CD8-positive, alpha-beta T cell (primary cell): ENCODE measurements at regions of chr20 and their contacts with region 1.

Region 1: GRCh38 chr20:24746351-24746685 is 202.8 kb upstream of the CST7 start:
- DNase-seq: no peak
- ATAC-seq: no peak
- H3K4me3 ChIP-seq: no peak overlapping the region
- H3K4me3 Mint-ChIP-seq: no peak overlapping the region
- H3K27ac ChIP-seq: no peak overlapping the region
- H3K27ac Mint-ChIP-seq: no peak overlapping the region
- H3K4me1 ChIP-seq: no peaks in the 10 kb centered on the region
- H3K4me1 Mint-ChIP-seq: peaks cover 3% of the 10 kb centered on the region
- H3K27me3 ChIP-seq: no peaks in the 10 kb centered on the region
- H3K27me3 Mint-ChIP-seq: no peaks in the 10 kb centered on the region
- CTCF ChIP-seq: no peak

Region 2: DNA sequence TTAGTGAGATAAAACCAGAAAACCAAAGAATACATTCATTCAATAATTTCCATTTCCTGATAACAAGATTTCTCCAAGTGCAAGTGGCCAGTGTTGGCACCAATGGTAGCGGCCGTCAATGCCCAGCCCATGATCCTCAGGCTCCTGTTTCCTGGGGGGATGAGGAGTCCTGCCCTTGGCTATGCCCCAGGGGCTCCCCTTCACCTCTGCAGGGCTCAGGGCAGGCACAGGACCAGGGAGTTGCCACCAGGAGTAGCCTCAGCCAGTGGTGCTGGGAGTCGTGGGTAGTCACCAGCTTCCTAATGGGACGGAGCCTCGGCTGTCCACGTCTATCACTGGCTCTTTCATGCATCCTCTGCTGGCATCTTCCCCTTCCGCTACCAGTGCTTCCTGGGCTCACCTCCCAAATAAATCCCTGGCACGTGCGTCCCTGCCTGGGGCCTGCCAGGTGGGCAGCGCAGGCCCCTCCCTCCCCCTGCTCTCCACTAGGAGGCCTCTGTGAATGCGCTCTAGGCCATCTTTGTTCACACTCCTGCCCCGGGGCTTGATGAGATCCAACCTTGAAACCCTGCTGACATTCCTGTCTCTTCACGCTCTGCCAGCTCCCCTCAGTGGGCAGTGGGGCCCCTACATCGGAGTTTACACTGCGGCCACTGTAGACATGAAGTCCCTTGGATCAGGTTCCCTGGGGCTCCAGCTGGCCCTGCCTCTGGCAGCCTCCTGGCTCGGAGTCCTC is 61.2 kb before region 1 on chr20:
- CTCF ChIA-PET with region 1: no interaction called
- POLR2A ChIA-PET with region 1: no interaction called
- intact Hi-C with region 1: loop called in 1 of 2 experiments (anchors 10 kb)
- DNase-seq: no peak
- ATAC-seq: no peak
- H3K4me3 ChIP-seq: no peak overlapping the region
- H3K4me3 Mint-ChIP-seq: no peak overlapping the region
- H3K27ac ChIP-seq: no peak overlapping the region
- H3K27ac Mint-ChIP-seq: no peak overlapping the region
- H3K4me1 ChIP-seq: no peaks in the 10 kb centered on the region
- H3K4me1 Mint-ChIP-seq: no peaks in the 10 kb centered on the region
- H3K27me3 ChIP-seq: no peaks in the 10 kb centered on the region
- H3K27me3 Mint-ChIP-seq: no peaks in the 10 kb centered on the region
- CTCF ChIP-seq: no peak

Region 3: GRCh38 chr20:24718696-24719095 is 27.6 kb before region 1 on chr20:
- CTCF ChIA-PET with region 1: no interaction called
- POLR2A ChIA-PET with region 1: no interaction called
- intact Hi-C with region 1: no loop called
- DNase-seq: no peak
- ATAC-seq: no peak
- H3K4me3 ChIP-seq: no peak overlapping the region
- H3K4me3 Mint-ChIP-seq: no peak overlapping the region
- H3K27ac ChIP-seq: no peak overlapping the region
- H3K27ac Mint-ChIP-seq: no peak overlapping the region
- H3K4me1 ChIP-seq: no peaks in the 10 kb centered on the region
- H3K4me1 Mint-ChIP-seq: no peaks in the 10 kb centered on the region
- H3K27me3 ChIP-seq: no peaks in the 10 kb centered on the region
- H3K27me3 Mint-ChIP-seq: peaks cover 9% of the 10 kb centered on the region
- CTCF ChIP-seq: no peak

Region 4: GRCh38 chr20:25160467-25160866 is 414.1 kb after region 1 on chr20:
- CTCF ChIA-PET with region 1: no interaction called
- POLR2A ChIA-PET with region 1: no interaction called
- intact Hi-C with region 1: no loop called
- DNase-seq: no peak
- ATAC-seq: no peak
- H3K4me3 ChIP-seq: no peak overlapping the region
- H3K4me3 Mint-ChIP-seq: no peak overlapping the region
- H3K27ac ChIP-seq: no peak overlapping the region
- H3K27ac Mint-ChIP-seq: no peak overlapping the region
- H3K4me1 ChIP-seq: no peaks in the 10 kb centered on the region
- H3K4me1 Mint-ChIP-seq: no peaks in the 10 kb centered on the region
- H3K27me3 ChIP-seq: peaks cover 0 to 4% of the 10 kb centered on the region in 2 experiments
- H3K27me3 Mint-ChIP-seq: peaks cover 6% of the 10 kb centered on the region
- CTCF ChIP-seq: no peak

Region 5: GRCh38 chr20:25579081-25579770 is 832.9 kb after region 1 on chr20:
- CTCF ChIA-PET with region 1: no interaction called
- POLR2A ChIA-PET with region 1: no interaction called
- intact Hi-C with region 1: no loop called
- DNase-seq: no peak
- ATAC-seq: no peak
- H3K4me3 ChIP-seq: no peak overlapping the region
- H3K4me3 Mint-ChIP-seq: no peak overlapping the region
- H3K27ac ChIP-seq: no peak overlapping the region
- H3K27ac Mint-ChIP-seq: no peak overlapping the region
- H3K4me1 ChIP-seq: peaks cover under 1% of the 10 kb centered on the region
- H3K4me1 Mint-ChIP-seq: peaks cover 3% of the 10 kb centered on the region
- H3K27me3 ChIP-seq: no peaks in the 10 kb centered on the region
- H3K27me3 Mint-ChIP-seq: peaks cover 12% of the 10 kb centered on the region
- CTCF ChIP-seq: no peak